ENCODE measurements at regions of chr14 and their contacts with region 1.

Region 1: DNA sequence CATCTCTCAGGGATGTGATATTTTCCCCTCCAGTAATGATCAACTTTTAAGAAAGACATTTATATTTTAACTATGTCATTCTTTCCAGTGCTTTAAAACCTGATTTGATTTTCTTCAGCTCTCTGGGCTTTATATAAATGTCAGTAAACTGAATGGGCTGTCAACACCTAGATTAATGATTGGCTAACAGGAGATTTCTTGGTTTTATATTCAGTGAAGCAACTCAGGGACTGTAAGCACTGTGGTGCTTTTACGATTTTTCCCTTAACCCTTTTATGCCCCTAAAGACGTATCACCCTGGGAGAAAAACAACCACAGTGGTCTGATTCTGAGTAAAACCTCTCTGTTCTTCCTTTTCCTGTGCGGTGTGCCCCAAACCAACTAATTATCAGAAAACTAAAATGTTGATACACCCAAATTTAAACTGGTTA is 38.0 kb downstream of the PTGER2 start:
- DNase-seq: no peak
- ATAC-seq: no peak
- H3K4me3 ChIP-seq: no peak overlapping the region
- H3K27ac ChIP-seq: peak overlapping the region; percentile 72; the same call in 1 of the 2 replicates
- H3K4me1 ChIP-seq: peaks cover 28% of the 10 kb centered on the region
- H3K27me3 ChIP-seq: no peaks in the 10 kb centered on the region
- CTCF ChIP-seq: no peak
- POLR2A ChIP-seq: no peak
- RAD21 ChIP-seq: no peak

Region 2: DNA sequence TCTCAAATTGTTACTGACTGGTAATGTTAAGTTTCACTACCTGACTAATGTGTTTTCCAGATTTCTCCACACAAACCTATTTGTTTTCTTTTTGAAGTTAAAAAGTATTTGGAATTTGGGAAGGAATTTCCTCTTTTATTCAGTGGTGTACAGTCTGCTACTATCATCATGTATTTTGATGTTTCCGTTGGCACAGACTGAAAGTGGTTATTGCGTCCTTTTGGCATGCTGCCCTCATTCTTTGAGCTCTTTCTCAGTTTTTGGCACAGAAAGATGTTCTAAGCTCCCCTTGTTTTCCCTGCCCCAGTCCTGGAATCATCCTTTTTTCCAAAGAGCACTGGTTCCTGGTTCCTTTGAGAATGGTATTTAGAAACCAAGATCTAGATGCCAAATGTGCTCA is 394.1 kb before region 1 on chr14:
- CTCF ChIA-PET with region 1: no interaction called
- POLR2A ChIA-PET with region 1: no interaction called
- dilution Hi-C with region 1: no loop called
- in situ Hi-C with region 1: no loop called
- intact Hi-C with region 1: no loop called
- DNase-seq: peak; percentile 45
- ATAC-seq: no peak
- H3K4me3 ChIP-seq: no peak overlapping the region
- H3K27ac ChIP-seq: no peak overlapping the region
- H3K4me1 ChIP-seq: peaks cover 5% of the 10 kb centered on the region; the same call in 1 of the 2 replicates
- H3K27me3 ChIP-seq: no peaks in the 10 kb centered on the region
- CTCF ChIP-seq: no peak
- POLR2A ChIP-seq: no peak
- RAD21 ChIP-seq: no peak

Region 3: GRCh38 chr14:52175982-52176502 is 176.0 kb before region 1 on chr14:
- CTCF ChIA-PET with region 1: no interaction called
- POLR2A ChIA-PET with region 1: no interaction called
- dilution Hi-C with region 1: no loop called
- in situ Hi-C with region 1: no loop called
- intact Hi-C with region 1: no loop called
- DNase-seq: no peak
- ATAC-seq: no peak
- H3K4me3 ChIP-seq: no peak overlapping the region
- H3K27ac ChIP-seq: no peak overlapping the region
- H3K4me1 ChIP-seq: no peaks in the 10 kb centered on the region
- H3K27me3 ChIP-seq: peaks cover 11% of the 10 kb centered on the region
- CTCF ChIP-seq: no peak
- POLR2A ChIP-seq: no peak
- RAD21 ChIP-seq: no peak

Region 4: GRCh38 chr14:52422650-52423356 is 70.7 kb after region 1 on chr14:
- CTCF ChIA-PET with region 1: no interaction called
- POLR2A ChIA-PET with region 1: interaction called, 11 read pairs
- dilution Hi-C with region 1: no loop called
- in situ Hi-C with region 1: no loop called
- intact Hi-C with region 1: no loop called
- DNase-seq: no peak
- ATAC-seq: no peak
- H3K4me3 ChIP-seq: no peak overlapping the region
- H3K27ac ChIP-seq: no peak overlapping the region
- H3K4me1 ChIP-seq: no peaks in the 10 kb centered on the region; the same call in 1 of the 2 replicates
- H3K27me3 ChIP-seq: no peaks in the 10 kb centered on the region
- CTCF ChIP-seq: no peak
- POLR2A ChIP-seq: no peak
- RAD21 ChIP-seq: no peak